ENCODE measurements at regions of chr16 and their contacts with region 1.

Region 1: GRCh38 chr16:24539291-24539849 is at the start of gene RBBP6:
- DNase-seq: peak; percentile 98
- H3K4me3 Mint-ChIP-seq: peak within 1 kb of the TSS; percentile 100
- H3K27ac Mint-ChIP-seq: peak within 1 kb of the TSS; percentile 100
- H3K4me1 Mint-ChIP-seq: peaks cover 20% of the 10 kb centered on the region
- H3K27me3 Mint-ChIP-seq: no peaks in the 10 kb centered on the region
- total RNA-seq, gene RBBP6: 65.7 and 73.8 TPM in 2 replicates

Region 2: DNA sequence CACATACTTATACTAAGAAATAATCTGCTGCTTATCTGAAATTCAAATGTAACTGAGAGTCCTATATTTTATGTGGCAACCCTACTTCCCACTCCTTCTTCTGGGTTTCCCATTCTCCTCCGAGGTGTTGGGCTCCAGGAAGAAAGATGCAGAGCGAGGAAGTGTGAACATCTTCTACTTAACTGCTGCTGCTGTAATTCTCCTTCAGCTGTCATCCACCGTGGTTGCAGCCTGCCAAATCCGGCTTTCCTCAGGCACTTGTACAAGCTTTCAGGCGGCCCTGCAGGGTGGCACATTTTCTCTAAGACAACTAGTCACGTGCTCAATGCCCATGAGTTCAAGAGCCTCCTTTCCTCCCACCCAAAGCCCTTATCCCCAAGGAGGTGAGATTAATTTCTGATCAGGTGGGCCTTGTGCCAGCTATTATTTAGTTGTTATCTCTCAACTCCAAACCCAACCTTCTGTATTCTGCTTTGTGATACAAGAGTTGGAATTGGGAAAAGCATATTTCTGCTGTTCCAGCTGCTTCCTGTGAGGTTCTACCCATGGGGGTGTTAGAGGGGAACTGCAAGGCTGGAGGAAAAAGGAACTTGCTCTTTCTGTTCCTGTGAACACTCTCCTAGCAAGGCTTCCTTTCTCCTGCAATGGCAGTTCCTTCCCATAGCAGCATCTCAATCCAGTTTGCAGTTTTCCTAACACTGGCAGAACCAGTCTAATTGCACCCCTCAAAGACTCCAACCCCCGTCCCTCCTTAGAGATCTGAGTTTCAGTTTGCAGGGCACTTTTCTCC is 67.6 kb before region 1 on chr16:
- intact Hi-C with region 1: no loop called
- DNase-seq: no peak
- H3K4me3 Mint-ChIP-seq: no peak overlapping the region
- H3K27ac Mint-ChIP-seq: no peak overlapping the region
- H3K4me1 Mint-ChIP-seq: no peaks in the 10 kb centered on the region
- H3K27me3 Mint-ChIP-seq: peaks cover 4% of the 10 kb centered on the region

Region 3: GRCh38 chr16:24516900-24517669 is 22.3 kb before region 1 on chr16:
- intact Hi-C with region 1: loop called (anchors 1 kb)
- DNase-seq: peak; percentile 93
- H3K4me3 Mint-ChIP-seq: peak overlapping the region; percentile 42
- H3K27ac Mint-ChIP-seq: no peak overlapping the region
- H3K4me1 Mint-ChIP-seq: peaks cover 11% of the 10 kb centered on the region
- H3K27me3 Mint-ChIP-seq: peaks cover 8% of the 10 kb centered on the region

Region 4: DNA sequence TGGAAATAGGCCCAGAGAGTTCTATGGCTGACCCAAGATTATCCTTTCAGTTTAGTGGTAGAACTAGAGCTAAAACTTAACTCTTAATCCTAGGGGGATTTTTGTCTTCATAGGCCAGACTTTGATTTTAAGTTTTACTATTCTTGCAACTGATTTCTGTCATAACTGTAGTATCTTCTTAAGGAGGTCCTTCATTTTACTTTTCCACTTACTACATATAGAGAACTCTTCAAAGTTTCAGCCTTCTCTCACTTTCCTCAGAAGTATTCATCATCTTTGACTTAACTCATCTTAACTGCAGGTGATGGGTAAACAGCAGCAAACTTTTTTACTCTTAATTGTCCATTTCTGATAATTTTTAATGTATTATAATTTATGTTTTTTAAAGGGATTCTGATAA is 23.4 kb after region 1 on chr16:
- intact Hi-C with region 1: loop called (anchors 2 kb)
- DNase-seq: no peak
- H3K4me3 Mint-ChIP-seq: no peak overlapping the region
- H3K27ac Mint-ChIP-seq: no peak overlapping the region
- H3K4me1 Mint-ChIP-seq: peaks cover 6% of the 10 kb centered on the region
- H3K27me3 Mint-ChIP-seq: no peaks in the 10 kb centered on the region

Region 5: GRCh38 chr16:24670623-24671454 is 131.5 kb after region 1 on chr16:
- intact Hi-C with region 1: loop called (anchors 2 kb)
- DNase-seq: no peak
- H3K4me3 Mint-ChIP-seq: peak overlapping the region; percentile 45
- H3K27ac Mint-ChIP-seq: peak overlapping the region; percentile 74
- H3K4me1 Mint-ChIP-seq: peaks cover 21% of the 10 kb centered on the region
- H3K27me3 Mint-ChIP-seq: peaks cover 6% of the 10 kb centered on the region

Region 6: GRCh38 chr16:24729985-24730815 is 190.8 kb after region 1 on chr16:
- intact Hi-C with region 1: loop called (anchors 5 kb)
- DNase-seq: no peak
- H3K4me3 Mint-ChIP-seq: peak overlapping the region; percentile 99
- H3K27ac Mint-ChIP-seq: peak overlapping the region; percentile 98
- H3K4me1 Mint-ChIP-seq: peaks cover 35% of the 10 kb centered on the region
- H3K27me3 Mint-ChIP-seq: peaks cover 2% of the 10 kb centered on the region

Region 7: DNA sequence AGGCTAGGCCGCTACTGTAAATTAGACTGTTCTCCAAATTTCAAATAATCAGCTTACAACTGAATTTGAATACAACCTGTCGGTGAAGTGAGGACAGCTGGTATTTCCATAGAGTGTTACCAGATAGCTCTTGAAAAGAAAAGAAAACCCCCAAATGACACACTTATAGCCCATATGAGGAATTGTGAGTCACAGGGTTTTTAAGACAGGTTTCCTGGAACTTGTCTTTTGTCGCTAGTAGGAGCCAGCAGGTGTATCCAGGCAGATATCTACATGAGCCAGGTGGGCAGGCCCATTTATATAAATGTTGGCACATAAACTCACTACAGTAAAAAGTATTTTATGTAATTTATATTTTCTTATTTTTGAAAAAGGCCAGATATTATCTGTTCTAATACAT is 214.1 kb after region 1 on chr16:
- intact Hi-C with region 1: loop called (anchors 5 kb)
- DNase-seq: no peak
- H3K4me3 Mint-ChIP-seq: peak overlapping the region; percentile 15
- H3K27ac Mint-ChIP-seq: peak overlapping the region; percentile 51
- H3K4me1 Mint-ChIP-seq: peaks cover 35% of the 10 kb centered on the region
- H3K27me3 Mint-ChIP-seq: no peaks in the 10 kb centered on the region

Region 8: GRCh38 chr16:25014500-25015147 is 475.3 kb after region 1 on chr16:
- intact Hi-C with region 1: loop called (anchors 10 kb)
- DNase-seq: peak; percentile 73
- H3K4me3 Mint-ChIP-seq: peak overlapping the region; percentile 98
- H3K27ac Mint-ChIP-seq: peak overlapping the region; percentile 94
- H3K4me1 Mint-ChIP-seq: peaks cover 62% of the 10 kb centered on the region
- H3K27me3 Mint-ChIP-seq: no peaks in the 10 kb centered on the region